HepG2 (cell line): ENCODE measurements at regions of chr7 and their contacts with region 1.

Region 1: GRCh38 chr7:8217200-8218068 is 44.5 kb downstream of the ICA1 start:
- DNase-seq: peak; percentile 51
- ATAC-seq: peak; percentile 34; the same call in 1 of the 3 replicates
- H3K4me3 ChIP-seq: no peak overlapping the region
- H3K27ac ChIP-seq: no peak overlapping the region
- H3K4me1 ChIP-seq: no peaks in the 10 kb centered on the region
- H3K27me3 ChIP-seq: no peaks in the 10 kb centered on the region
- CTCF ChIP-seq: peak; percentile 69
- EP300 ChIP-seq: no peak
- POLR2A ChIP-seq: no peak
- RAD21 ChIP-seq: no peak

Region 2: DNA sequence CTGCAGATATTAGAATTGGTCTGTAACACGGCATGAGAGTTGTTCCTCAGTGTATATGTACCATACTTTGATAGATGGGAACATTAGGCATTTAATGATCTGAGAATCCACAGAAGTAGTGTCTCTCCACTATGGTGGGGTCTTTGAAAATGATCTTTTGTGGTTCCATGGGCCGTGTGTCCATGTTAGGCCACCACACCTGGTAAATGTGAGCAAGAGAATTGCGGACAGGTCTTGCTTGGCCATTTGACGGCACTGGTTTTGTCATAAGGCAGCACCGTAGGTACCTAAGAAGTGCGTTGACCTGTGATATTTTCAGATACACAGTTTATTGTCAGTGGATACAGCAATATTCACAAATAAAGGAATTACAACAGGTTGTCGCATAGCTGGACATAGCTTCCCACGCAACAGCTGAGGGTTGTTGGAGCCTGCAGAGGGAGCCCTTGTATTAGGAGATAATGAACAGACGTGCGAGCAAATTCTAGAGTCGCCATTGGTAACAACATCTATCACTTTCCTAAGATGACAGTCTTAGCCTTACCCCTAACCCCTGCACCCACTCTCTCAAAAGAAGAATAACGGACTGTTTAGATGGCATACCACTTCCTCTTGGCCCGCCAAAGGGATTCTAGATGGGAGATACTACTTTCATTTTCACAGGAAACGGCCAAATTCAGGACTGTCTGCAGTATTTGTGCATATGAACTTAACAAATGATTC is 793.1 kb before region 1 on chr7:
- CTCF ChIA-PET with region 1: interaction called, 12 read pairs
- POLR2A ChIA-PET with region 1: no interaction called
- in situ Hi-C with region 1: loop called (anchors 10 kb)
- intact Hi-C with region 1: no loop called
- DNase-seq: peak; percentile 58
- ATAC-seq: peak; percentile 95
- H3K4me3 ChIP-seq: peak overlapping the region in 2 of 3 experiments; percentile 5 to 25; a peak in 2 of 6 replicates
- H3K27ac ChIP-seq: no peak overlapping the region
- H3K4me1 ChIP-seq: no peaks in the 10 kb centered on the region
- H3K27me3 ChIP-seq: no peaks in the 10 kb centered on the region
- CTCF ChIP-seq: peak; percentile 89
- EP300 ChIP-seq: no peak
- POLR2A ChIP-seq: no peak
- RAD21 ChIP-seq: peak; percentile 91

Region 3: DNA sequence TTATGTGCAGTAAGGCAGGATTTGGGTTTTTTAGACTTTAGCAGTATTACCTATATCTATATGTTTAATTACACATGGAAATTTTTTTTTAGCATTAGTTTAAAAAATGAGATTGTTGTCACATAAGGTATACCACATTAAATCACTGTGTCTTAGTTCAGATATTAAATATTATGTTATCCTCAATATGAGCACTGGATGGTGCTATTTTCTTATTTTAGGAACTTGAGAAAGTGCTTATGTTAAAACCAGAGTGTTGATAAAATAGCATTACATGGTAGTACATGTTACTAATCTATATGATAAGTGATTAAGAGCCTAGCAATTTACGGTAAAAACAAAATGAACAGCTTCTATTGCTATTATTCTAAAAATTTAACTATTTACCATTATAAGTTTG is 622.0 kb before region 1 on chr7:
- CTCF ChIA-PET with region 1: no interaction called
- POLR2A ChIA-PET with region 1: no interaction called
- in situ Hi-C with region 1: no loop called
- intact Hi-C with region 1: loop called (anchors 5 kb)
- DNase-seq: peak; percentile 3
- ATAC-seq: no peak
- H3K4me3 ChIP-seq: no peak overlapping the region
- H3K27ac ChIP-seq: no peak overlapping the region
- H3K4me1 ChIP-seq: peaks cover 8% of the 10 kb centered on the region
- H3K27me3 ChIP-seq: no peaks in the 10 kb centered on the region
- CTCF ChIP-seq: peak; percentile 26; the same call in 1 of the 2 replicates
- EP300 ChIP-seq: no peak
- POLR2A ChIP-seq: no peak
- RAD21 ChIP-seq: no peak

Region 4: DNA sequence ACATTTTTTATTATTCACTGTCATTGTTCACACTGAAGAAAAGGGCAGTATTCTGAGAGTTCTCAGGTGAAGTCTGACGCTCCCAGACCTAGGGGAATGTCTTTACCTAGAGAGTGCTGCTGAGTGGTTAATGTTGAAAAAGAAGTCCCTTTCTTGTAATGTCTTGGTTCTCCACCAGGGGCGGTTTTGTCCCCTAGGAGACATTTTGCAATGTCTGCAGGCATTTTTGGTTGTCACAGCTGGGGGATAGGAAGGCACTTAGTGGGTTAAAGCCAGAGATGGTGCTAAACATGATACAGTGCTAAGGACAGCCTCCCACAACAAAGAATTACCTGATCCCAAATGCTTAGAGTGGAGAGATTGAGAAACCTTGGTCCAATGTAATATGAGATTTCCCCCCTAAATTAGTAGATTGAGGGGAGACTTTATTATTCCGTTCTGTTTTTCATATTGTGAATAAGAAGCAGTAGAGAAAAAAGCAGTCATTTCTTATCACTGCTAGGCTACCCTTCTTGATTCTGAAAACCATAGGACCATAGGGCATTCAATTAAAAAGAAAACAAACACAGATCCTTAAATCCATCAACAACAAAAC is 563.7 kb before region 1 on chr7:
- CTCF ChIA-PET with region 1: no interaction called
- POLR2A ChIA-PET with region 1: no interaction called
- in situ Hi-C with region 1: loop called (anchors 25 kb)
- intact Hi-C with region 1: no loop called
- DNase-seq: no peak
- ATAC-seq: no peak
- H3K4me3 ChIP-seq: no peak overlapping the region
- H3K27ac ChIP-seq: no peak overlapping the region
- H3K4me1 ChIP-seq: peaks cover 51% of the 10 kb centered on the region
- H3K27me3 ChIP-seq: no peaks in the 10 kb centered on the region
- CTCF ChIP-seq: 0 out of 2 replicates have a peak, but pooled peaks have one; percentile 23
- EP300 ChIP-seq: no peak
- POLR2A ChIP-seq: no peak
- RAD21 ChIP-seq: no peak

Region 5: DNA sequence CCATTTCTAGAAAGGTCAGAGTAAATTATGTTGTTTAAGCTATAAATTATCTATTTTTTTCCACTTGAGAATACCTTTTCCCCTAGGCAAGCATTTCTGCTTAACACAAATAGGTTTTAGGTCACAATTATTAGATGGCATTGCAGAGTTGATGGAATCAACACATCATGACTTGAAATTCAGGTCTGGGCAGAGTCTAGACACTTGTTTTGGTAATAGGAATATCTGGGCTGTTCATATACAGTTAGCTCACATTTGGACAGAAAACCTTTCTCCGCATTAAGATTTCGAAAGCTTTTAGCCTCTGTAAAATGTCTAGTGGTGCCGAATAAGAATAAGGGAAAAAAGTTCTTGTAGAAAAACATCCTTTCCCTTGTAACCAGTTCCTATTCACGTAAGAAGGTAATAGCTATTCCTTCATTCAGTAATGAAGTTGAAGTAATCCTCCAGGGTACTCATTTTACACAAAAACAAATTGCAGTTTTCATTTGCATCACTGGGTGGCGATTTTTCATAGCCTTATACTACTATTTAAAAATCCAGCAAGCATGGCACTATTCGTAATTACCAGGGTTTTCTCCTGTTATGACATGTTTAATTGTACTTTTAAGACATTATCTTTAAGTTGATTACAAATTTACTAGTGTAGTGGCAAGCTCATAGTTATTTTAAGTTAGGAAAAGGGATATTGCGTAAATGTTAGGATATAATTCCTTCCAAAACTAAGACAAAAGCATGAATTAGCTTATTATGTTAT is 536.1 kb before region 1 on chr7:
- CTCF ChIA-PET with region 1: no interaction called
- POLR2A ChIA-PET with region 1: no interaction called
- in situ Hi-C with region 1: no loop called
- intact Hi-C with region 1: loop called (anchors 5 kb)
- DNase-seq: peak; percentile 50
- ATAC-seq: peak; percentile 66
- H3K4me3 ChIP-seq: no peak overlapping the region
- H3K27ac ChIP-seq: no peak overlapping the region
- H3K4me1 ChIP-seq: no peaks in the 10 kb centered on the region
- H3K27me3 ChIP-seq: no peaks in the 10 kb centered on the region
- CTCF ChIP-seq: peak; percentile 64
- EP300 ChIP-seq: no peak
- POLR2A ChIP-seq: no peak
- RAD21 ChIP-seq: 0 out of 2 replicates have a peak, but pooled peaks have one; percentile 35

Region 6: GRCh38 chr7:8105449-8106095 is 111.9 kb before region 1 on chr7:
- CTCF ChIA-PET with region 1: no interaction called
- POLR2A ChIA-PET with region 1: no interaction called
- in situ Hi-C with region 1: no loop called
- intact Hi-C with region 1: no loop called
- DNase-seq: no peak
- ATAC-seq: no peak
- H3K4me3 ChIP-seq: no peak overlapping the region
- H3K27ac ChIP-seq: no peak overlapping the region
- H3K4me1 ChIP-seq: peaks cover 13% of the 10 kb centered on the region; the same call in 1 of the 2 replicates
- H3K27me3 ChIP-seq: no peaks in the 10 kb centered on the region
- CTCF ChIP-seq: no peak
- EP300 ChIP-seq: no peak
- POLR2A ChIP-seq: no peak
- RAD21 ChIP-seq: no peak

Region 7: GRCh38 chr7:8201846-8202441 is 15.5 kb before region 1 on chr7:
- CTCF ChIA-PET with region 1: no interaction called
- POLR2A ChIA-PET with region 1: no interaction called
- in situ Hi-C with region 1: no loop called
- intact Hi-C with region 1: no loop called
- DNase-seq: no peak
- ATAC-seq: no peak
- H3K4me3 ChIP-seq: no peak overlapping the region
- H3K27ac ChIP-seq: no peak overlapping the region
- H3K4me1 ChIP-seq: no peaks in the 10 kb centered on the region
- H3K27me3 ChIP-seq: peaks cover 0 to 14% of the 10 kb centered on the region in 2 experiments; a peak in 3 of 5 replicates
- CTCF ChIP-seq: no peak
- EP300 ChIP-seq: no peak
- POLR2A ChIP-seq: no peak
- RAD21 ChIP-seq: no peak

Region 8: DNA sequence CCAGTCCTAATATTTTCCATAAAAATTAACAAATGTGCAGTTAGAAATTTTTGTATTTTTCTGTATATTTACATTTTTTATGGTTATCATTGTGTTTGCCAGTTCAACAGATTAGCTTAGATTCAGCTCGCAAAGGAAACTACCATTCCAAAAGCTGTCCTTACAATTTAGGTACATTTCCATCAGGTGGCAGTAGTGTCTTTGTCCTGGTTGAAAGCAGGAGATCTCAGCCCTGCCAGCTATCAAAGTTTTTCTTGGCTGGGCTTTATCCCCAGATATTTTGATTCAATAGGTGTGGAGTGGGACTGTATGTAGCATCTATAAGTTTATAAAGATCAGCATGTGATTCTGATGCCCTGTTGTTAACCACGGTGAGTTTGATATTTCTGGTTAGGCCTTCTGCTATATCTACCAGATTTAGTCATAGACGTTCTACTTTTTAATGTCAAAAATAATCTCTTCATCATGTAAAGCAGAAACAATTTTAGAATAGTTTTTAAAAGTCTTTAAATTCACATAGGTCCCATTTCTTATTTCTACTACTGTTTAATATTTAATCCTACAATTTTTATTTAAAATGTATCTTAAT is 60.1 kb after region 1 on chr7:
- CTCF ChIA-PET with region 1: no interaction called
- POLR2A ChIA-PET with region 1: no interaction called
- in situ Hi-C with region 1: no loop called
- intact Hi-C with region 1: no loop called
- DNase-seq: peak; percentile 29
- ATAC-seq: peak; percentile 74
- H3K4me3 ChIP-seq: no peak overlapping the region
- H3K27ac ChIP-seq: no peak overlapping the region
- H3K4me1 ChIP-seq: no peaks in the 10 kb centered on the region
- H3K27me3 ChIP-seq: no peaks in the 10 kb centered on the region
- CTCF ChIP-seq: peak; percentile 51; the same call in 1 of the 2 replicates
- EP300 ChIP-seq: no peak
- POLR2A ChIP-seq: no peak
- RAD21 ChIP-seq: 0 out of 2 replicates have a peak, but pooled peaks have one; percentile 16

Region 9: GRCh38 chr7:8295638-8296361 is 78.4 kb after region 1 on chr7:
- CTCF ChIA-PET with region 1: no interaction called
- POLR2A ChIA-PET with region 1: no interaction called
- in situ Hi-C with region 1: no loop called
- intact Hi-C with region 1: loop called (anchors 5 kb)
- DNase-seq: peak; percentile 80
- ATAC-seq: peak; percentile 92
- H3K4me3 ChIP-seq: no peak overlapping the region
- H3K27ac ChIP-seq: no peak overlapping the region
- H3K4me1 ChIP-seq: no peaks in the 10 kb centered on the region
- H3K27me3 ChIP-seq: no peaks in the 10 kb centered on the region
- CTCF ChIP-seq: peak; percentile 82
- EP300 ChIP-seq: no peak
- POLR2A ChIP-seq: no peak
- RAD21 ChIP-seq: peak; percentile 74